OCI-LY7 (cell line): ENCODE measurements at regions of chr4 and their contacts with region 1.

Region 1: DNA sequence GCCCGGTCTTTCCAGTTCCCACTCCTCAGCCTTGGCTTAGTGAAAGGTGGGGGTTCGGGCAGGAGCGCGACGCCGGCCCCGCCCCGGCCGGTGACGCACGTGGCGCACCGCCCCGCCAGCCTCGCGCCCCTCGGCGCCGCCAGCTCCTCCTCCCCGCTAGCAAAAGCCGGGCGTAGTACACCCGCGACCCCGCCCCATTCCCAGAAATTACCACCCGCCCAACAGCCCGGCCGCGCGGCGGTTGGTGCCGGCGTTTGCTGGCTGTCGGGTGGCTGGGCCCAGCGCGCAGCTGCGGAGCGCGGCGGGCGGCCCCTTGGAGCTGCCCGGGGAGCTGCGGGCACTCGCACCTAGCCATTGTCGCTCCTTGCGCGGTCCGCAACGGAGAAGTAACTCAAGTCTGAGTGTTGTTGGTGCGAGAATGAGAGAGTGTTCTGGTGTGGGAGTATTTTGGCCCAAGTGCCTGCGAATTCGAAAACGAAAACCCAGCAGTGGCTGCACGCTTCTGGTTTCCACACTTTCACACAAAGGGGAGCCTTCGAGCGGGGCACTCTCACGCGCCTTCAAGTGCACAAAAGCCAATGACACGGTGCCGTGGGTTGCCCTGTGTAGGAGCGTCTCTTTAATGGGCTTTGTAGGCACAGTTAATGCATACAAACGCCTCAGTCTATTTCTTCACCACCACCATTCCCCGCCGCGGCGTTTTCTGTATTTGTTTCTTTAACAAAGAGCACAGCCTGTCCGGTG is 1.0 kb upstream of the ELF2 start:
- DNase-seq: peak; percentile 95
- H3K4me3 ChIP-seq: peak overlapping the region; percentile 83
- H3K27ac ChIP-seq: peak overlapping the region; percentile 89
- H3K4me1 ChIP-seq: peaks cover 25% of the 10 kb centered on the region
- CTCF ChIP-seq: no peak

Region 2: DNA sequence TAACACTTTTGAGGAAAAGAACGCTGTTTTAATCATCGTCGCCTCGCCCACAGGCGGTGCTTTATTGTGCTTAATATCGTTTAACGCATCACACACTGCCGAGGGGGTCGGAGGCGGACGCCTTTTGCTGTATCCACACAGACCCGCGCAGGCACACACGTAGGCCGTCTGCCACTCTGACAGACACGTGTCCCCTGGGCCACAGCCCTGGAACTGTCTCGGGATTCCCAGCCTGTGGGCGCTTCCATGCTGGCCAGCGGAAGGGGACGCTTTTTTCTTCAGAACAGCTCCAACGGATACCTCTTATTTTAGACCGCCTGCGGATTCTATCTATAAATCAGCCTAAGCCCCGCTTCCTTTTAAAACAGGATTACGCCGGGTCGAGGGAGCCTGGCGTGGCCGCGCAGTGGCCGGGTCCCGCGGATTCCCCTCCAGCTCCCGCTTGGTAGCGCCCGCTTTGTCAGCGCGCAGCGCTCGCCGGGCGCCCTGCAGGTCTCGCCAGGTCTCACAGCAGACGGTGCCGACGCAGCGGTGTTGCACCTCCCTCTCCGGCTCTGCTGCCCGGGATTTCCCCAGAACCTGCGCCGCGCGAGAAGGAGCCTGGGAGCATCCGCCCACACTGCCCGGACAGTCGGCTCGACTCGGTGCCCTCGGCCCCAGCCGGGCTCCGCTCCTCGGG is 162.6 kb before region 1 on chr4 and contains the start of gene NOCT:
- CTCF ChIA-PET with region 1: no interaction called
- POLR2A ChIA-PET with region 1: interaction called, 4 read pairs
- intact Hi-C with region 1: loop called (anchors 5 kb)
- DNase-seq: peak; percentile 95
- H3K4me3 ChIP-seq: peak within 1 kb of the TSS; percentile 88
- H3K27ac ChIP-seq: peak within 1 kb of the TSS; percentile 79
- H3K4me1 ChIP-seq: peaks cover 38% of the 10 kb centered on the region
- CTCF ChIP-seq: no peak
- total RNA-seq, gene NOCT: 12.7 and 22.8 TPM in 2 replicates

Region 3: DNA sequence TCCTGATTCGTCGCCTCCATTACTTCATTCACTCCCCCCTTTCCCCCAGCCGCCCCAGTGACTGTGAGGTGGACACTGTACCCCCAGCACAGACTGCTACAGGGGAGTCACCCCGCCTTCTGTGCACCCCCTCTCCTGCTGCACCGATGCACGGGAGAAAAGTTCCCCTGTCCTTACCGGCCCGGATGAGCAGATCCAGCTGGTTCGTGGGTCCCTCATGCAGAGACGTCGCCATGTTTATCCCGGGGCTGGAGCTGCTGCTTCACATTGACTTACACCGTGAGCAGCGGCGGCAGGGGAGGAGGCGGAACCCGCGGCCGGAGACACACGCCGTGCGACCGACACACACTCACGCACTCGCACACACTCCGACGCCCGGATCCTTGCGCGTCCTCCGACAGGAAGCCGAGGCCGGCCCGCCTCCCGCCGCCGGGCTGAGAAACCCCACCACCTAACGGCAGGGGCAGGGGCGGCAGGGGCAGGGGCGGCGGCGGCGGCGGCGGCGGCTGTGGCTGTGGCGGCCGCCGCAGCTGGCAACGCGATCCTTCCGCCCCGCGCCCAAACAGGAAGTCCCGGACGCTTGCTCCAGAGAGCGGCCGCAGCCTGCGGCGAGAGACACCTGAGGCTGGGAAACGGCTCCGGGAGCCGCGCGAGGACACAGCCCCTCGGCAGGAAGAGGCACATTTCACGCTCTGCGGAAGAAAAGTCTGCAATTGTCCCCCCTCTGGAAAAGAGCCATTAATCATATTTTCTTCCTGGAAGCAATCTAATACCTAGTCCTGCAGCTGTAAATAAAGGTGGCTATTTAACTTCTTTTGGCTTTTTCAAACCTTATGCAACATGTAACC is 93.9 kb before region 1 on chr4:
- CTCF ChIA-PET with region 1: no interaction called
- POLR2A ChIA-PET with region 1: interaction called, 10 read pairs
- intact Hi-C with region 1: loop called (anchors 2 kb)
- DNase-seq: peak; percentile 93
- H3K4me3 ChIP-seq: peak overlapping the region; percentile 91
- H3K27ac ChIP-seq: peak overlapping the region; percentile 95
- H3K4me1 ChIP-seq: peaks cover 22% of the 10 kb centered on the region
- CTCF ChIP-seq: peak; percentile 46

Region 4: DNA sequence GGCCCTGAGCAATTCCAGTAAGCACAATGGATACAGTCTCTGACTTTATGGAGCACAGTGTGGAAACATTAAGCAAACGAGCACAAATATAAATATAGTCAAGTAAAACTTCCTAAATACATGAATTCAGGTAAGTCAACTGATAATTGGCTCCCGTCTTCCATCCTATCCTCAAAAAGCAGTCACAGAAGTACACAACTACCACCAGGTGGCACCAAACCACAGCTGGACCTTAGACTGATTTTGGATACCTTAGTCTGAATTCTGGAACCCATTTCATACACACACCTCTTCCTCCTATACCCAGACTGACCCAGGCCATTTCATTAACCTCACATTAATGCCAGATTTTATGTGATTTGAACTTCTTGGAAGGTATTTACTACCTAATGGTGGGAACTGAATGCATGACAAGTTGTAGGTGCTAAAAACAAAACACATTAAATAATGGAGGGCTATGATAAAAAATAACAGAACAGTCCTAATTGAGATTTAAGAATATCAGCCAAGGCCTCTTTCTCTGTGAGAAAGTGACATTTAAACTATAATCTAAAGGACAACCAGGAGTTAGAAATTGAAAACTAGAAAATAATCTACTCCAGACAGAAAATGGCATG is 78.6 kb before region 1 on chr4:
- CTCF ChIA-PET with region 1: no interaction called
- POLR2A ChIA-PET with region 1: no interaction called
- intact Hi-C with region 1: loop called (anchors 2 kb)
- DNase-seq: peak; percentile 90
- H3K4me3 ChIP-seq: no peak overlapping the region
- H3K27ac ChIP-seq: no peak overlapping the region
- H3K4me1 ChIP-seq: peaks cover 4% of the 10 kb centered on the region
- CTCF ChIP-seq: peak; percentile 97

Region 5: GRCh38 chr4:139243448-139244365 is 65.7 kb after region 1 on chr4:
- CTCF ChIA-PET with region 1: no interaction called
- POLR2A ChIA-PET with region 1: no interaction called
- intact Hi-C with region 1: no loop called
- DNase-seq: no peak
- H3K4me3 ChIP-seq: no peak overlapping the region
- H3K27ac ChIP-seq: no peak overlapping the region
- H3K4me1 ChIP-seq: peaks cover 25% of the 10 kb centered on the region
- CTCF ChIP-seq: no peak

Region 6: GRCh38 chr4:139295206-139295941 is 117.3 kb after region 1 on chr4:
- CTCF ChIA-PET with region 1: interaction called, 4 read pairs
- POLR2A ChIA-PET with region 1: interaction called, 8 read pairs
- intact Hi-C with region 1: loop called (anchors 1 kb)
- DNase-seq: peak; percentile 97
- H3K4me3 ChIP-seq: peak overlapping the region; percentile 86
- H3K27ac ChIP-seq: peak overlapping the region; percentile 65
- H3K4me1 ChIP-seq: peaks cover 32% of the 10 kb centered on the region
- CTCF ChIP-seq: peak; percentile 95

Region 7: GRCh38 chr4:139940600-139940999 is 762.6 kb after region 1 on chr4:
- CTCF ChIA-PET with region 1: no interaction called
- POLR2A ChIA-PET with region 1: no interaction called
- intact Hi-C with region 1: no loop called
- DNase-seq: no peak
- H3K4me3 ChIP-seq: no peak overlapping the region
- H3K27ac ChIP-seq: no peak overlapping the region
- H3K4me1 ChIP-seq: no peaks in the 10 kb centered on the region
- CTCF ChIP-seq: no peak